Naive thymus-derived CD4-positive, alpha-beta T cell (primary cell): ENCODE measurements at regions of chr4 and their contacts with region 1.

Region 1: DNA sequence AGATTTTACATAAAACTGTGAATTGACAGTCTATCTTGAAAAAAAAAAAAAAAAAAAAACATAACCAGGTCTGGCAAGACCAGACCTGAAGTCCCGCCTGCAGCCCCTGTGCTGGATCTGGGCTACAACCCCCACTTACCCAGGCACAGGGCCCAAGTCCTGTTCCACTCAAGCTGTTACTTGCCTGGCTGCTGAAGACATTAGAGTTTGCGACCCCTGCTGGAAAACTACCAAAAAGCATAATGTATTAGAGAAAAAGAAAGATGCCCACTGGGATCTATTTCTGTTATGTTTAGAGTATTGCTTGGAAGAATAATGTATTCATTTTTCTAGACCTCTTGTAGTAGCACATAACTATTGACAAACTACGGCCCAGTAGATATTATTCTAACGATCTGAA is 4.7 kb downstream of the HS3ST1 start:
- DNase-seq: peak in 4 of 9 donors; percentile 13 to 49 (median 31)
- ATAC-seq: peak; percentile 41
- H3K4me3 ChIP-seq: no peak overlapping the region
- H3K4me3 Mint-ChIP-seq: no peak overlapping the region
- H3K27ac ChIP-seq: no peak overlapping the region
- H3K27ac Mint-ChIP-seq: no peak overlapping the region
- H3K4me1 ChIP-seq: peaks cover 0 to 8% of the 10 kb centered on the region in 2 donors
- H3K4me1 Mint-ChIP-seq: peaks cover 7 to 16% (median 14%) of the 10 kb centered on the region in 7 donors
- H3K27me3 ChIP-seq: no peaks in the 10 kb centered on the region
- H3K27me3 Mint-ChIP-seq: peaks cover 18 to 33% (median 23%) of the 10 kb centered on the region in 5 donors

Region 2: DNA sequence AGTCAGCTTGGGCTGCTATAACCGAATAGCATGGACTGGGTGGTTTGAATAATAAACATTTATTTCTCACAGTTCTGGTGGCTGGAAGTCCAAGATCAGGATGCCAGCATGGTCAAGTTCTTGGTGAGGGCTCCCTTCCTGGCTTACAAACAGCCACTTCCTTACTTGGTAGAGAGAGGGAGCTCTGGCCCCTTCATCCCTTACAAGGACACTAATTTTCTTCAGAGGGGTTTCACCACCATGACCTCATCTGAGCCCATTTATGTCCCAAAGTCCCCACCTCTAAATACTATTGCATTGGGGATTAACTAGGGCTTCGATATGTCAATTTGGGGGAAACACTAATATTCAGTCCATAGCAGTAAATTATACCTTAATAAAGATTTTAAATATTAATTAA is 801.3 kb before region 1 on chr4:
- CTCF ChIA-PET with region 1: no interaction called
- POLR2A ChIA-PET with region 1: no interaction called
- intact Hi-C with region 1: loop called in 1 of 2 experiments (anchors 1 kb)
- DNase-seq: peak in 1 of 9 donors; percentile 7
- ATAC-seq: no peak
- H3K4me3 ChIP-seq: no peak overlapping the region
- H3K4me3 Mint-ChIP-seq: no peak overlapping the region
- H3K27ac ChIP-seq: no peak overlapping the region
- H3K27ac Mint-ChIP-seq: no peak overlapping the region
- H3K4me1 ChIP-seq: no peaks in the 10 kb centered on the region
- H3K4me1 Mint-ChIP-seq: peaks cover 0 to 15% (median 5%) of the 10 kb centered on the region in 7 donors
- H3K27me3 ChIP-seq: no peaks in the 10 kb centered on the region
- H3K27me3 Mint-ChIP-seq: peaks cover 0 to 7% (median 0%) of the 10 kb centered on the region in 5 donors

Region 3: GRCh38 chr4:11436673-11437072 is 12.7 kb after region 1 on chr4:
- CTCF ChIA-PET with region 1: interaction called, 10 read pairs
- POLR2A ChIA-PET with region 1: no interaction called
- intact Hi-C with region 1: no loop called
- DNase-seq: no peak
- ATAC-seq: no peak
- H3K4me3 ChIP-seq: no peak overlapping the region
- H3K4me3 Mint-ChIP-seq: no peak overlapping the region
- H3K27ac ChIP-seq: no peak overlapping the region
- H3K27ac Mint-ChIP-seq: no peak overlapping the region
- H3K4me1 ChIP-seq: no peaks in the 10 kb centered on the region
- H3K4me1 Mint-ChIP-seq: peaks cover 0 to 3% (median 0%) of the 10 kb centered on the region in 7 donors
- H3K27me3 ChIP-seq: no peaks in the 10 kb centered on the region
- H3K27me3 Mint-ChIP-seq: peaks cover 0 to 19% (median 0%) of the 10 kb centered on the region in 5 donors